Adrenal gland (tissue), 19 donors: ENCODE measurements at regions of chr1 and their contacts with region 1.

Region 1: DNA sequence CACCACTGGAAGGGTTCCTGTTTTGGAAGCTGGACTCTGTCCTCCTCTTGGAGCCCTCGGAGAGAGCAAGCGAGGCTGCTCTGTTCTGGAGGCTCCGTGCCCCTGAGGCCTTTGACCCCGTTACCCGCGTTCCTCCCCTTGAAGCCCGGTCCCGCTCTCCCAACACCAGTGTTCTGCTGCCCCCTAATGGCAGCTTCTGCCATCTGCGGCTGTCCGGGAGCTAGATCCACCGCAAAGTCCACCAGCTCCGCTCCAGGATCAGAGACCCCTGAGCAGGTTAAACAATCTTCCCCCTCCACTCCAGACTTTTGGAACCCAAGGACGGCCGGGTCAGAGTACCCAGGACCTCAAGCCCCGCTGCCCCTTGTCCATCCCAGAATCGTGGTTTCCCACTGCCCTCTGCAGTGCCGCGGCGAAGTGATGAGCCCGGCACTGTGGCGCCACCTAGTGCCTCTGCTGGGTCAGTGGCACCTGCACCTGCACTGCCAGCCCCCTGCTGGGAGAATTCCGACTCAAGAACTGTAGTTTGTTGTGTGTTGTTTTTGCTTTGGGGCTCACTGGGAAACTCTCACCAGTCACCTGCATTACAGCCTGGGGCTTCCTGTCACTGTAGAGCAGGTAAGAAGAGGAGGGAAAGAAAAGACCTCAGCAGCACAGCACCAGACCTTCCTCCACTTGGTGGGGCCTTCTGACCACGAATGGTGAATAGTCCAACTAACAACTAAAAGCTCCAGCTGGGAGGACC is 63.5 kb upstream of the NFASC start:
- DNase-seq: peak; percentile 82 to 90 (median 83)
- H3K4me3 ChIP-seq: peak overlapping the region in 1 of 4 donors; percentile 54
- H3K27ac ChIP-seq: no peak overlapping the region
- H3K4me1 ChIP-seq: peaks cover 0 to 4% of the 10 kb centered on the region in 2 donors
- H3K27me3 ChIP-seq: no peaks in the 10 kb centered on the region
- CTCF ChIP-seq: peak; percentile 91 to 99 (median 96)
- POLR2A ChIP-seq: no peak

Region 2: GRCh38 chr1:204565617-204566582 is 241.2 kb before region 1 on chr1:
- intact Hi-C with region 1: loop called in 1 of 2 experiments (anchors 10 kb)
- DNase-seq: peak; percentile 40 to 84 (median 56)
- H3K4me3 ChIP-seq: no peak overlapping the region
- H3K27ac ChIP-seq: no peak overlapping the region
- H3K4me1 ChIP-seq: no peaks in the 10 kb centered on the region
- H3K27me3 ChIP-seq: no peaks in the 10 kb centered on the region
- CTCF ChIP-seq: peak; percentile 56 to 80 (median 68)
- POLR2A ChIP-seq: no peak

Region 3: GRCh38 chr1:204751894-204752687 is 55.0 kb before region 1 on chr1:
- intact Hi-C with region 1: no loop called
- DNase-seq: no peak
- H3K4me3 ChIP-seq: no peak overlapping the region
- H3K27ac ChIP-seq: no peak overlapping the region
- H3K4me1 ChIP-seq: no peaks in the 10 kb centered on the region
- H3K27me3 ChIP-seq: no peaks in the 10 kb centered on the region
- CTCF ChIP-seq: no peak
- POLR2A ChIP-seq: no peak

Region 4: DNA sequence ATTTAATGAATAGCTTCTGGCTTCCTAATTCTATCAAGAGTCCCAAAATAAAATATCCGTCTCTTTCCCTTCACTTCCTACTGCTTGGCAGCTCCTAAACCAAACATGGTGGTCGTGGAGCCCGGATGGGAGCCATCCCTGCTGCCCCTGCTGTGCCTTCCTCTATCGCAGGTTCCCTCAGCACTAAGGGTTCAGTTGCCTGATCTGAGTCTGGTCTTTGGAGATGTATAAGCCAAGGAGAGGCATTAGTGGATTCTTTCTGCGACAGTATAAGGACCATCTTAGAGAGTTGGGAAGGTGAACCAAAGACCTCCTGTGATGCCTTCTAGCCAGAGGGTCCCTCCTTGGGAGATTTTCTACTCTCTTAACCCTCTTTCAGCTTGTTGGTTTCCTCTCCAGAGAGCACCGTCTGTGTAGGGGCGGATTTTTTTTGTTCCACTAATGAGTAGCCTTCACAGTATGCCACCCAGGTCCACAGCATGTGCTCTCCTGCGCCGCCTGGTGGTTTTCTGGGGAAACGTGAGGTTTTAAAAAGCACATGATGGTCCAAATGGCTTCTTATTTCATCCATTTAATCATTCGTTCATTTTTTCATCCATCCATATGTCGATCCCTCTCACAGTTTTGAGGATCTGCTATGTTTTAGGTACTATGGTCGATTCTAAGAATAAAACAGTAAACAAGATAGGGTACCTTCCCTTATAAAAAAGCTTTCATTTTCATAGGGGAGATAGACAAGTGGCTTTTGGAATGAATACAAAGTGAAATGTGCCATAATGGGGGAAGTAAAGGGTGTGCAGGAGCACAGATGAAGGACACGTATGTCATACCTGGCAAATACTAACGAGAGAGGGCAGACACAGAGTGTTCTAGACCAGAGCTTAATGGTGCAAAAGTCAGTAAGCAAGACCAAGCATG is 134.6 kb after region 1 on chr1:
- intact Hi-C with region 1: loop called (anchors 2 to 5 kb)
- DNase-seq: peak; percentile 55 to 91 (median 73)
- H3K4me3 ChIP-seq: no peak overlapping the region
- H3K27ac ChIP-seq: no peak overlapping the region
- H3K4me1 ChIP-seq: peaks cover 0 to 6% of the 10 kb centered on the region in 2 donors
- H3K27me3 ChIP-seq: no peaks in the 10 kb centered on the region
- CTCF ChIP-seq: peak; percentile 84 to 92 (median 89)
- POLR2A ChIP-seq: no peak